ENCODE measurements at regions of chr14 and their contacts with region 1.

Region 1: DNA sequence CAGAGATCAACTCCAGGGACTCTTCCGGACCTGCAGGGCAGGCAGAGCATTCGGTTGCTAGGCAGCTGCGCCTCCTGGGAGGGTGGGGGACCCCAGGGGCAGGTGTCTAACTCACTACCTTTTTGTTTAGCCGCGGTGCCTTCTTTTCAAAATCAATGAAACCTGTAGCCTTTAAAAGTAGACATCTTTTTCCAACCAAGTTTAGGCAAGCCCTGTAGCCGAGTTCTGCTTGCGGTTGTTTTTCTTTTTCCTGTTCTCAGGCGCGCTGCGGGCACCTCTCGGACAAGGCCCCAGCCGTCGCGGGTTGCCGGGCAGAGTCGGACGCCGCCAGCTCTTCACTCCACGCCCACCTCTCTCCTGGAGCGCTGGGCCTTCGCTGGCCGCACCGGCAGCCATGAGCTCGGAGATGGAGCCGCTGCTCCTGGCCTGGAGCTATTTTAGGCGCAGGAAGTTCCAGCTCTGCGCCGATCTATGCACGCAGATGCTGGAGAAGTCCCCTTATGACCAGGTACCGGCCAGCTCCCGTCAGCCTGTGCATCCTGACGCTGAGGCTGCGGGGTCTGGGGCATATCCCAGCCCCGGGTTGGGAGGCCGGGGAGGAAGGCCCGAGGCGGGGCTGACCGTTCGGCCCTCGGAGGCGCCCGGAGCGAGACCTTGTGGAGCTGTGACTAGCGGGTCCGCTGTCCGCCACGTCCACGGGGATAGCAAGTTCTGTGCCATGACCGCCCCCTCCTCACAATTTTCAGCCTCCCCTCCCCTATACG is at the start of gene TTC8:
- DNase-seq: peak; percentile 74
- H3K4me3 Mint-ChIP-seq: peak within 1 kb of the TSS; percentile 84
- H3K27ac Mint-ChIP-seq: peak within 1 kb of the TSS; percentile 93
- H3K4me1 Mint-ChIP-seq: peaks cover 14% of the 10 kb centered on the region
- H3K27me3 Mint-ChIP-seq: peaks cover 15% of the 10 kb centered on the region
- total RNA-seq, gene TTC8: 3.5 and 4.6 TPM in 2 replicates

Region 2: DNA sequence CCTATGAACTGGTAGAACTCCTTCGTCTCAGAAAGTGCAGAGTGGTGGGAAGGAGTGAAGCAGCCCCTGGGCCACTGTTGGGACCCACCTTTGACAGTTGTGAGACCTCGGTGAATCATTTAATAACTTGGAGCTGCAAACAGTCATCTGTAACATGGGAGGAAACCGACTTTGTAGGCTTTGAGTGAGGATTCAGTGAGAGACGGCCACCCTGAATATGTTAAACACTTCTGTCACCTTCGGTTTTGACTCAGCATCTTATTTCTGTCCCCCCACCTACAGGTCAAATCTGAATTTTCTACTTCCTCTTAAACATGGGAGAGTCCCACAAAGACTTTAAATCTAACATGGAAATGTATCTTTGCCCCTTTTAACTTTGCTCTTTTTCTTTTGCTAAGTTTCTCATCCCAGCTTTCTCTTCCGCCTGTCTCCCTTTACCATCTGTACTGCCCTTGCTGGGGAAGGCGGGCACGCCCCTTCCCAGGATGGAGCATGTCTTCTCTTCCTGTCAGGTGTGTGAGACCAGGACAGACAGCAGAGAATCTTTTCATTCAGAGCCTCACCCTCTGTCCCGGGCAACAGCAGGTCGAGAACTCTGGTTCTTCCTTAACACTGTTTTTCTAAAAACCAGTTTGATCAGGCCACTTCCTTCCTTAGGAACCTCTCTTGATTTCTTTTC is 224.6 kb before region 1 on chr14:
- intact Hi-C with region 1: loop called (anchors 2 kb)
- DNase-seq: peak; percentile 6
- H3K4me3 Mint-ChIP-seq: peak overlapping the region; percentile 64
- H3K27ac Mint-ChIP-seq: peak overlapping the region; percentile 91
- H3K4me1 Mint-ChIP-seq: peaks cover 48% of the 10 kb centered on the region
- H3K27me3 Mint-ChIP-seq: no peaks in the 10 kb centered on the region

Region 3: GRCh38 chr14:88792572-88793258 is 31.8 kb before region 1 on chr14 and contains the start of gene EML5:
- intact Hi-C with region 1: loop called (anchors 1 kb)
- DNase-seq: peak; percentile 75
- H3K4me3 Mint-ChIP-seq: peak within 1 kb of the TSS; percentile 82
- H3K27ac Mint-ChIP-seq: peak within 1 kb of the TSS; percentile 71
- H3K4me1 Mint-ChIP-seq: peaks cover 13% of the 10 kb centered on the region
- H3K27me3 Mint-ChIP-seq: peaks cover 31% of the 10 kb centered on the region
- total RNA-seq, gene EML5: 1.5 and 1.7 TPM in 2 replicates

Region 4: GRCh38 chr14:88879022-88879421 is 54.5 kb after region 1 on chr14:
- intact Hi-C with region 1: no loop called
- DNase-seq: no peak
- H3K4me3 Mint-ChIP-seq: no peak overlapping the region
- H3K27ac Mint-ChIP-seq: no peak overlapping the region
- H3K4me1 Mint-ChIP-seq: no peaks in the 10 kb centered on the region
- H3K27me3 Mint-ChIP-seq: no peaks in the 10 kb centered on the region

Region 5: DNA sequence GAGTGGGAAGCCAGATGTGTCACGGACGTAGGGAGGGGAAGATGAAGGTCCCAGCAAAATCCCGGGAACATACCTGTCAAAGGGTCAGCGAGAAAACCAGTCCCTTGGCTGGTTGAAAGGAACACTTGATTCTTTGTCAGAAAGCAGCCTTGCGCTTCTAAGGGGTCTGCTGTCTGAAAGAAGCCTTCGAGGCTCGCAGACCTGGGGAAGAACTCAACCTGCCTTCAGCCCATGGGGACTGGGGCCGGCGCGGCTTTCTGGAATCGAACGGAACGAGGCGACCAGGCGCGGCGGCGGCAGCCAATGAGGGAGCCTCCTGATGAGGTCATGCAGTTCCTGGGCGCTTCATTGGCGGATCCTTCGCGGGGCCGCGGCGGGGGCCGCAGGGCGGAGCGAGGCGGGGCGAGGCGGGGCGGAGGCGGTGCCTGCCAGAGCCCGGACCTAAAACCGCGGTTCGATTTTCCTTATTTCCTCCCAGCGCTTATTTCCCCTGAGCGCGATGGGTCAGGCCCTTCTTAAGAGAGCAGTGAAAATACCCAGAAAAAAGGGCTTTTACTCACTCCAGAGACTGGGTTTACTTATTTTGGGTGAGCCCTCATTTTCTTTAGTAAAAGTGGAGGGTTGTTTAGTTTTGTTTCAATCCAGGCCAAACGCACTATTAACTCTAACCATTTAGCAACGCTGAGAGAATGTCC is 2003.6 kb after region 1 on chr14:
- intact Hi-C with region 1: loop called (anchors 10 kb)
- DNase-seq: peak; percentile 91
- H3K4me3 Mint-ChIP-seq: peak overlapping the region; percentile 76
- H3K27ac Mint-ChIP-seq: peak overlapping the region; percentile 88
- H3K4me1 Mint-ChIP-seq: peaks cover 28% of the 10 kb centered on the region
- H3K27me3 Mint-ChIP-seq: peaks cover 5% of the 10 kb centered on the region

Measured in activated T-helper 1 cell treated with anti-CD3 and anti-CD28 coated beads, Interleukin-12 subunit alpha, Interleukin-12 subunit beta, Interleukin-2, Interleukin-4 antibody, amounts not matched to agents 30 ng/mL and 10 ng/mL and 1 ng/mL, durations not matched to agents 14 hours and 24 hours and 36 hours (primary cell).